Panc1 (cell line): ENCODE measurements at regions of chr6 and their contacts with region 1.

Region 1: DNA sequence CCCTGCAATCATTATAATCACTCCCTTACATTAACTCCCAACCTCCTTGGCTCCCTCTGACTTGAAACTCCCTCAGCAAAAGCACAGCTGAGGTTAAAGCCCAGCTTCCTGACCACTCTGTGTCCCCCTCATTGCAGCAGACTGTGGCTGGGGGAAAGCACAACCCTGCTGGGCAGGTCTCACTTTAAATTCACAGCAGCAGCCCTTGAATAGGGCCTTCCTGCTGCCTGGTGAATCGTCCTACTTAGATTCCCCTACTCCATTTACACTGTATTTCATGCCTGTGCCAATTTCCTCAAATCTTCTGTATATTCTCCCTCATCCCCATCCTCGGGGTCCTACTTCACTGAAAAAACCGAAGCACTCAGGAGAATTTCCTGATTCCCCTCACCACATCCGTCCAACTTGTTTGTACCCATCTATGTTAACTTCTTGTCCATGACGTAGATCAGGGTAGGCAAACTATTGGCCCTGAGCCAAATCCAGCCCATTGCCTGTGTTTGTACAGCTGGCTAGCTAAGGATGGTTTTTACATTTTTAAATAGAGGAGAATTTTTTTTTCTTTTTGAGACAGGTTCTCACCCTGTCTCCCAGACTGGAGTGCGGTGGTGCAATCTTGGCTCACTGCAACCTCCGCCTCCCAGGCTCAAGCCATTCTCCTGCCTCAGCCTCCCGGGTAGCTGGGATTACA is 31.5 kb upstream of the GCM1 start:
- DNase-seq: no peak
- ATAC-seq: peak; percentile 47; the same call in 1 of the 2 replicates
- H3K4me3 ChIP-seq: no peak overlapping the region
- H3K27ac ChIP-seq: no peak overlapping the region
- H3K4me1 ChIP-seq: no peaks in the 10 kb centered on the region
- H3K27me3 ChIP-seq: no peaks in the 10 kb centered on the region
- CTCF ChIP-seq: no peak

Region 2: GRCh38 chr6:53616450-53617357 is 436.6 kb after region 1 on chr6:
- CTCF ChIA-PET with region 1: interaction called, 10 read pairs
- POLR2A ChIA-PET with region 1: no interaction called
- in situ Hi-C with region 1: no loop called
- intact Hi-C with region 1: no loop called
- DNase-seq: no peak
- ATAC-seq: no peak
- H3K4me3 ChIP-seq: no peak overlapping the region
- H3K27ac ChIP-seq: no peak overlapping the region
- H3K4me1 ChIP-seq: no peaks in the 10 kb centered on the region
- H3K27me3 ChIP-seq: no peaks in the 10 kb centered on the region
- CTCF ChIP-seq: no peak